ENCODE measurements at regions of chr3 and their contacts with region 1.

Region 1: DNA sequence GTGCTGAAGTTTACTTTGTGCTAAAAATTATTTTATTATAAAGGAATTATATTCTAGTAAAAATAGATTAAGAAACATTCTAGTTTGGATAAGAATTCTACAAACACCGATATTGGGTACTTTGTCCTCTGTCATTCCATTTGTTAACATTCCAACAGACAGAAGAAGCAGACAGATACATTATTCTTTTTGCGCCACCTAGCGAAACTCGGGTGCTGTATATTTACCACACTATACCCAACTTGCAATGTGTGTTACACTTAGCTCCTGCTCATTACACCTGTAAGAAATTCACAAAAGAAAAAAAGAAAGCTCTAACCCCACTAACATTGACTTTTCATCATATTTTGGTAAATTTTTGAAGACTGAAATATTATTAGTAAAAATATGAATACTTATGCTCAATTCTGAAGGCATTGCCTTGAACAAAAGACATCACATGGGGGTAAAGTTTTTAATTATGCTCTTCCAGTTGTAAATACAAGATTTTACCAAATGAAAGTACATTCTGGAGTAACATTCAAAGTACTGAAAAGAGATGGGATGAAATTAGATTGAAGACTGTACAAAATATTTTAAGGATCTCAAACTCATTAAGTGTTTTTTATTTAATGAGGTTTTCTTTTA is 136.5 kb upstream of the MLF1 start:
- DNase-seq: no peak
- ATAC-seq: peak; percentile 54
- H3K4me3 Mint-ChIP-seq: no peak overlapping the region
- H3K27ac Mint-ChIP-seq: no peak overlapping the region
- H3K4me1 Mint-ChIP-seq: no peaks in the 10 kb centered on the region
- H3K27me3 Mint-ChIP-seq: no peaks in the 10 kb centered on the region
- CTCF ChIP-seq: no peak

Region 2: DNA sequence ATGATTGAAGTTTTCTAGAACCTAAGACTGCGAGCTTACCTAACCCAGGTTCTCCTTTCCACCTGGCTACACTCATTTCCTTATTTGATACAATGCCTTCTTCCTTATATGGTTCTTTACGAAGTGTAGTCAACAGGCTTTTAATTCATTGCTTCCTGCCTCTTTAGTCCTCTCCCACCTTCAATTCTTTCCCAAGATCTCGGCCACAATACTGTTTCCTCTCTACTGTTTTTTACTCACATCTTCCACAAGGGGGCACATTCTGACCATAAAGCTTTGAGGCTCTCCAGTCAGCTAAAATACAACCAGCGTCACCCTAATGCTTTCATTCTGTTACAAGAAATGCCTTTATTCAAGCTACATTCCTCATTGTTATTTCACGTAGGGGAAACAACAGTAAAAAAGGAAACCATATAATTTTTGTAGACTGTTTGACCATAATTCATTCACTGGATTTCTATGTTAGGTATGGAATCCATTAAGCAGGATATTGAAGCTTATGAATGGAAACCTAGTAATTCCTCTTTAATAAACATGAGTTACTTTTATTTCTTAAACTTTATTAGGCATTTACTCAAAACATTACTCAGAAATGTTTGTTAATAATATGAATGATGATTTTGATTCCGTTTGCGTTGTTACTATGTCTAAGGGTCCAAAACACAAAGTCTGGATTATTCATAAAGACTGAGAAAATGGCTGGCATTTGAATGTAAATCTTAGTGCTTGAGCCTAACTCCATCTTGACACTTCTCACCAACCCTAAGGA is 901.8 kb before region 1 on chr3:
- CTCF ChIA-PET with region 1: interaction called, 7 read pairs
- POLR2A ChIA-PET with region 1: no interaction called
- intact Hi-C with region 1: loop called (anchors 2 kb)
- DNase-seq: no peak
- ATAC-seq: no peak
- H3K4me3 Mint-ChIP-seq: no peak overlapping the region
- H3K27ac Mint-ChIP-seq: no peak overlapping the region
- H3K4me1 Mint-ChIP-seq: no peaks in the 10 kb centered on the region
- H3K27me3 Mint-ChIP-seq: no peaks in the 10 kb centered on the region
- CTCF ChIP-seq: no peak

Region 3: GRCh38 chr3:157618075-157618760 is 816.3 kb before region 1 on chr3:
- CTCF ChIA-PET with region 1: interaction called, 8 read pairs
- POLR2A ChIA-PET with region 1: no interaction called
- intact Hi-C with region 1: loop called (anchors 1 kb)
- DNase-seq: no peak
- ATAC-seq: peak; percentile 93
- H3K4me3 Mint-ChIP-seq: no peak overlapping the region
- H3K27ac Mint-ChIP-seq: no peak overlapping the region
- H3K4me1 Mint-ChIP-seq: no peaks in the 10 kb centered on the region
- H3K27me3 Mint-ChIP-seq: peaks cover 16% of the 10 kb centered on the region
- CTCF ChIP-seq: no peak

Region 4: DNA sequence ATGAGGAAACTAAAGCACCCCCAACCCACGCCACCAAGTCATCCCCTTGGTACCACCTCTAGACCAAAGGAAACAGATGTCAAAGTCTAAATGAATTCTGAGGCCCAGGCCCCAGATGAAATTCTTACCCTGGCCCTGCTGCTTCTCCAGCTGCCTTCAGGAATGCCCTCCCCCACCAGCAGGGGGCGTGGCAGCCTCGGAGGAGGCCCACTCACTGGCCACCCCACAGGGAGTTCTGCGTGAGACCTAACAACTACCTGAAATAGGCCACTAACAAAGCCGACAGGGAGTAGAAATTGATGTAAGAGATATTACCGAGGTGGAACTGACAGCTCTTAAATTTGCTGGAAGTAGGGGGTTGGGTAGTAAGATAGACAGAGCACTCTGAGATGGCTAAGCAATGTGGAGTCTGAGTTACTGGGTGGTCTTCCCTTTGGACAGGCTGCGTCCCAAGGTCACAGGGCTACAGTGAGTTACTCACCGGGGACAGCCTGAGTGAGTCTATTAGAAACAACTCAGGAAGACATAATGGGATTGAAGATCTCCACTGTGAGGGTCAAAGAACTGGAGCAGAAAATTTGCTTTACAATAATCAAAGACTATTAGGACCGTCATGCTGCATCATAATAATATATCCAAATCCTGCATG is 569.0 kb before region 1 on chr3:
- CTCF ChIA-PET with region 1: interaction called, 20 read pairs
- POLR2A ChIA-PET with region 1: no interaction called
- intact Hi-C with region 1: no loop called
- DNase-seq: peak; percentile 20
- ATAC-seq: no peak
- H3K4me3 Mint-ChIP-seq: no peak overlapping the region
- H3K27ac Mint-ChIP-seq: no peak overlapping the region
- H3K4me1 Mint-ChIP-seq: no peaks in the 10 kb centered on the region
- H3K27me3 Mint-ChIP-seq: no peaks in the 10 kb centered on the region
- CTCF ChIP-seq: no peak

Region 5: GRCh38 chr3:158109804-158110657 is 324.5 kb before region 1 on chr3 and contains the start of gene RSRC1:
- CTCF ChIA-PET with region 1: interaction called, 7 read pairs
- POLR2A ChIA-PET with region 1: no interaction called
- intact Hi-C with region 1: loop called (anchors 5 kb)
- DNase-seq: peak; percentile 72
- ATAC-seq: peak; percentile 89
- H3K4me3 Mint-ChIP-seq: peak within 1 kb of the TSS; percentile 90
- H3K27ac Mint-ChIP-seq: peak within 1 kb of the TSS; percentile 83
- H3K4me1 Mint-ChIP-seq: peaks cover 48% of the 10 kb centered on the region
- H3K27me3 Mint-ChIP-seq: peaks cover 31% of the 10 kb centered on the region
- CTCF ChIP-seq: no peak
- total RNA-seq, gene RSRC1: 39.9 and 44.8 TPM in 2 replicates

Region 6: GRCh38 chr3:158709666-158710083 is 275.1 kb after region 1 on chr3:
- CTCF ChIA-PET with region 1: no interaction called
- POLR2A ChIA-PET with region 1: no interaction called
- intact Hi-C with region 1: no loop called
- DNase-seq: no peak
- ATAC-seq: no peak
- H3K4me3 Mint-ChIP-seq: no peak overlapping the region
- H3K27ac Mint-ChIP-seq: no peak overlapping the region
- H3K4me1 Mint-ChIP-seq: peaks cover 5% of the 10 kb centered on the region
- H3K27me3 Mint-ChIP-seq: no peaks in the 10 kb centered on the region
- CTCF ChIP-seq: no peak

Region 7: DNA sequence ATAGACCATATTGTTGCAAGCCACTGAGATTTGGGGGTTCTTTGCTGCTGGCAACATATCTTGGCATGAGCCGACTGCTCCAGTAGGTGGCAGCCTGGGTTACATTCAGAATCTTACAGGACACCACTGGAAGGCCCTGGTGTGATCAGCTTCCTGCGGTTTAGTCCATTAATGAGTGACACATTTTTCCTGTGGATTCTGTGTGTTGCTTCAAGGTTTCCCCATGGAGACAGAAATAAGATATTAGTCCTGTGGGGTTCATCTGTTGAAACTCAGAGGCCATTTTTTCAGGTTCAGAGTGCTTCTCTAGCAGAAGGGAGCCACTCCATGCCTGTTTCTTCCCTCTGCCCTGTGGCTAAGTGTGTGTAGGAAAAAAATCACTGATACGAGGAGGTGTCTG is 483.5 kb after region 1 on chr3:
- CTCF ChIA-PET with region 1: no interaction called
- POLR2A ChIA-PET with region 1: no interaction called
- intact Hi-C with region 1: no loop called
- DNase-seq: no peak
- ATAC-seq: no peak
- H3K4me3 Mint-ChIP-seq: no peak overlapping the region
- H3K27ac Mint-ChIP-seq: no peak overlapping the region
- H3K4me1 Mint-ChIP-seq: no peaks in the 10 kb centered on the region
- H3K27me3 Mint-ChIP-seq: no peaks in the 10 kb centered on the region
- CTCF ChIP-seq: no peak

Measured in activated B cell treated with CpG ODN at 0.5 μM for 24 hours (primary cell).